Activated T-helper 1 cell treated with anti-CD3 and anti-CD28 coated beads, Interleukin-12 subunit alpha, Interleukin-12 subunit beta, Interleukin-2, Interleukin-4 antibody, amounts not matched to agents 30 ng/mL and 10 ng/mL and 1 ng/mL, durations not matched to agents 14 hours and 24 hours and 36 hours (primary cell): ENCODE measurements at regions of chr4 and their contacts with region 1.

Region 1: DNA sequence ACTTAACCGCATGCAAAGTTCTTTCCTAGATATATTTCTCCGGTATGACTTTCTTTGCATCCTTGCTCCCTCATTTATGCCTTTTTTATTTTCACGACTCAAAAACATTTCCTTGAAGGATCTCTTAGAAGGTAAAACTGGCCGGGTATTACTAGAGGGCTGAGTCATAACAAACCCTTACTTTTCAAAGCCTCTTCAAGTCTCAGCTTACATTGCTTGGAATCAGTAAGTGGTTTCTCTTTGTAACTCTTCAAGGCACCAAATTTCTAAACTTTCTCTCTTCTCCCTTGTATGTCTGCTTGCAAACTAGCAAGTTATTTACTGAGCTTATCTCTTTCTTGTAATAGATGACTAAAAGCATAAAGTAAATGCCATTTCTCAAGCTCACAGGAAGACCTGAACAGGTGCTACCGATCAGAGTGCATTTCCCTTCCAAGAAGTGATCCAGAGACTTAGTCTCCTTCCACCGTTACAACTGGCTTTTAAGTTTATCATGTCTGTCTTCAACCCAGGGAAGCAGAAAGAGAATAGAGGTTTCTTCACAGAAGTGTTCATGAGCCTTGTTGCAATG is 75.5 kb downstream of the ANXA10 start:
- DNase-seq: no peak
- H3K4me3 Mint-ChIP-seq: no peak overlapping the region
- H3K27ac Mint-ChIP-seq: no peak overlapping the region
- H3K4me1 Mint-ChIP-seq: peaks cover 8% of the 10 kb centered on the region
- H3K27me3 Mint-ChIP-seq: no peaks in the 10 kb centered on the region

Region 2: DNA sequence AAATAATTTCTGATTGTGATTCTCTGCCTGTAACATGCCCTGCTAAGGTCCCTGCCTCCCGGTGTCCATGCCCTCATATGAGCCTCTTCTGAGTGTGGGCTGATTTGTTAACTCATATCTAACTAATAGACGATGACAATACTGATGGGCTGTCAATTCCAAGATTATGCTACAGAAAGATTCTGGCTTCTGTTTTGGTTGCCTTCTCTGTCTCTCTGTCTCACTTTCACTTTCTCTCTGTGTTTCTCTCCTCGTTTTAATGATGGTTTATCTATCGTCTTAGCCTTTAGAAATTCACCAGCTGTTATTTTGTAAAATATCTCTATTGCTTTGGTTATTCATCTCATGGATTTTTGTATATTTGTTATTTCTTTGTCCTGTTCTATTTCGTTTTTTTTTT is 387.9 kb before region 1 on chr4:
- intact Hi-C with region 1: loop called (anchors 10 kb)
- DNase-seq: no peak
- H3K4me3 Mint-ChIP-seq: no peak overlapping the region
- H3K27ac Mint-ChIP-seq: no peak overlapping the region
- H3K4me1 Mint-ChIP-seq: no peaks in the 10 kb centered on the region
- H3K27me3 Mint-ChIP-seq: no peaks in the 10 kb centered on the region

Region 3: DNA sequence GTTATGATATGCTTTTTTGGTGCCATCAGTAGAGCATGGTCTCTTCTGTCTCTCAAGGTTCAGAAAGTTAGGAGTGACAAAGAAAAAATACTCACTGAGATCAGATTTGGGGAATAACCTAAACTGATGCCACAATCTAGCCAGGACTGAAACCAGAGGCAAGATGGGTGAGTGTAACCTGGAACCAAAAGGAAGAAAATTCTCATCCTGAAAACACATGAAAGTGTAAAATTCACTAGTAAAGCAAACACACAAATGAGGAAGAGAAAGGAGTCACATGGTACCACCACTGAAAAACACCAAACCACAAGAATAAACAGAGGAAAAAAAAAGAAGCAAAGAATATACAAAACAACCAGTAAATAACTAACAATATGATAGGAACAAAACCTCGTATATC is 21.0 kb after region 1 on chr4:
- intact Hi-C with region 1: no loop called
- DNase-seq: no peak
- H3K4me3 Mint-ChIP-seq: no peak overlapping the region
- H3K27ac Mint-ChIP-seq: no peak overlapping the region
- H3K4me1 Mint-ChIP-seq: peaks cover 7% of the 10 kb centered on the region
- H3K27me3 Mint-ChIP-seq: peaks cover 2% of the 10 kb centered on the region